ENCODE measurements at regions of chr22 and their contacts with region 1.

Region 1: DNA sequence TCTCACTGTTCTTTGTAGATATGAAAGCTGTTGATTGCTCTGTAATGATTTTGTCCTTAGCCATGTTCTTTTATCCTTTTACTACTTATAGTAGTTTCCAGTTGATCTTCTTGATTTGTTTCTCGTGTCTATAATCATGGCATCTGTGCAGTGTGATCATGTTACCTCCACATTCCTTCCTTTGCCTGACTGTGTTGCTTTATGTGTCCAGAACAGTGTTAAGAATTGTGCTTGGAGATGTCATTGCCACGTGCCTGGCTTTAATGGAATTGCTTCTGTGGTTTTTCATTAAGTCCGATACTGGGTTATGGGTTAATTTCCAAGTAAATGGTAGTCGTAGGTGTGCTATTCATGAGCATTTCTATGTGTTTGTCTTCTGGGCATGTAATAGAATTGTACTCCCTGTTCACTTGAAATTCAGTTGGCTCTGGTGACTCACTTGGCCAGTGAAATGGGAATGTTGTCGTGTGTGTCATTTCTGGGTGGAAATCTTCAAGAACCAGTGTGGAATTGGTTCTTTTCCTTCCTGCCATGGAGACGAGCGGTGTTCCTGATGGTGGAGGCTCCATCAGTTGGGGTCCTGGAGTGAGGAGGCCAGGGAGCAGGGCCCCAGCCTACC is 6.8 kb downstream of the GTSE1 start:
- DNase-seq: no peak
- H3K4me3 ChIP-seq: no peak overlapping the region
- H3K27ac ChIP-seq: no peak overlapping the region
- H3K4me1 ChIP-seq: no peaks in the 10 kb centered on the region
- H3K27me3 ChIP-seq: no peaks in the 10 kb centered on the region
- CTCF ChIP-seq: no peak

Region 2: GRCh38 chr22:45994491-45995404 is 308.7 kb before region 1 on chr22:
- intact Hi-C with region 1: loop called (anchors 10 kb)
- DNase-seq: peak; percentile 68 to 94 (median 82)
- H3K4me3 ChIP-seq: no peak overlapping the region
- H3K27ac ChIP-seq: no peak overlapping the region
- H3K4me1 ChIP-seq: peaks cover 0 to 32% (median 7%) of the 10 kb centered on the region in 3 donors
- H3K27me3 ChIP-seq: no peaks in the 10 kb centered on the region
- CTCF ChIP-seq: peak; percentile 96